ENCODE measurements at regions of chr3 and their contacts with region 1.

Region 1: DNA sequence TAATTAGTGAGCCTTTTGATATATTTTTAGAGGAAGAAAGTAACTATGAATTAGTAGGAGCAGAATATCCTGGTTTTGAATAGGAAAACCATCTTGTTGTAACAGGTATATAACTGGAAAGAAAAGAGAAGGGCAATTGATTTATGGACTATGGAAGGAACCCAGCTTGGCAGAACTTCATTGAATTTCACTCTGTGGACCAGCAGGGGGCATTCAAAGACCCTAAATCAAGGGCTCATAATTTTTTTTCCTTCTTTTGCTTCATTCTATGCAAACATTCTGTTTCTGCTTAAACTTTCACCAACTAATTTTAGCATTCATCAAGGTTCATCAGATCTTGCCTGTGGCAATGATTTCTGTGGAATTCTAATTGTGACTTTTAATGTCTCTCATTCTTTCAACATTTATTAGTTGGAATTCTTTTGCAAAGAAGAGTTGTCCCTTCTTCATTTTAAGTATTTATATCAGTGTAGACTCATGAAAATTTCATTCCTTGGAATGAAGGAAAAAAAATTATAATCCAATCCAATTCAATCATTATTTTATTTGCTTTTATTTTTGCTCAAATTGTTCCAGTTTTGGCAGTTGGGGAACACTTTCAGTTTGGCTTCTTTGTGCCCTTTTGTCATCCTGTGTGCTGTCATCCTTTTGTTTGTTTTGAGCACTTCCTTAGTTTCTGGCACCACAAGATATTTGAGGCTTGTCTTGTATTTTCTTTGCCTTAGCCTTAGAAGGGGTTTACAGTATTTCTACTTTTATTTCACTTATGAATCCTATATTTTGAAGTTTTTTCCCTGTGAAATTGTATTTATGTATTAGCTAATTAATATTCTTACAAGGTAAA is 30.4 kb downstream of the NXPE3 start:
- DNase-seq: no peak
- ATAC-seq: peak in 1 of 2 donors; percentile 56
- H3K4me3 ChIP-seq: no peak overlapping the region
- H3K27ac ChIP-seq: no peak overlapping the region
- H3K4me1 ChIP-seq: no peaks in the 10 kb centered on the region
- H3K27me3 ChIP-seq: no peaks in the 10 kb centered on the region

Region 2: GRCh38 chr3:102036017-102036416 is 226.6 kb after region 1 on chr3:
- intact Hi-C with region 1: no loop called
- DNase-seq: no peak
- ATAC-seq: no peak
- H3K4me3 ChIP-seq: no peak overlapping the region
- H3K27ac ChIP-seq: no peak overlapping the region
- H3K4me1 ChIP-seq: no peaks in the 10 kb centered on the region
- H3K27me3 ChIP-seq: no peaks in the 10 kb centered on the region

Region 3: GRCh38 chr3:102224128-102224527 is 414.7 kb after region 1 on chr3:
- intact Hi-C with region 1: loop called (anchors 2 to 5 kb)
- DNase-seq: no peak
- ATAC-seq: peak; percentile 57 to 58
- H3K4me3 ChIP-seq: no peak overlapping the region
- H3K27ac ChIP-seq: no peak overlapping the region
- H3K4me1 ChIP-seq: no peaks in the 10 kb centered on the region
- H3K27me3 ChIP-seq: no peaks in the 10 kb centered on the region

Region 4: GRCh38 chr3:102229062-102229655 is 419.8 kb after region 1 on chr3:
- intact Hi-C with region 1: loop called (anchors 2 to 5 kb)
- DNase-seq: peak; percentile 50 to 83 (median 69)
- ATAC-seq: peak; percentile 64 to 80
- H3K4me3 ChIP-seq: no peak overlapping the region
- H3K27ac ChIP-seq: no peak overlapping the region
- H3K4me1 ChIP-seq: no peaks in the 10 kb centered on the region
- H3K27me3 ChIP-seq: no peaks in the 10 kb centered on the region

Measured in right cardiac atrium (tissue), 5 donors.